ENCODE measurements at regions of chr7 and their contacts with region 1.

Region 1: GRCh38 chr7:23712368-23713284 is 2.6 kb downstream of the STK31 start:
- DNase-seq: no peak
- H3K4me3 ChIP-seq: no peak overlapping the region
- H3K27ac ChIP-seq: no peak overlapping the region
- H3K4me1 ChIP-seq: peaks cover 0 to 10% (median 4%) of the 10 kb centered on the region in 4 donors
- H3K27me3 ChIP-seq: no peaks in the 10 kb centered on the region
- CTCF ChIP-seq: peak; percentile 57 to 64 (median 61)
- EP300 ChIP-seq: no peak
- POLR2A ChIP-seq: no peak

Region 2: GRCh38 chr7:22156205-22156604 is 1556.4 kb before region 1 on chr7:
- in situ Hi-C with region 1: no loop called
- intact Hi-C with region 1: no loop called
- DNase-seq: no peak
- H3K4me3 ChIP-seq: no peak overlapping the region
- H3K27ac ChIP-seq: no peak overlapping the region
- H3K4me1 ChIP-seq: no peaks in the 10 kb centered on the region
- H3K27me3 ChIP-seq: no peaks in the 10 kb centered on the region
- CTCF ChIP-seq: no peak
- EP300 ChIP-seq: no peak
- POLR2A ChIP-seq: no peak

Region 3: GRCh38 chr7:23546897-23547572 is 165.6 kb before region 1 on chr7:
- in situ Hi-C with region 1: no loop called
- intact Hi-C with region 1: loop called (anchors 10 kb)
- DNase-seq: peak; percentile 77
- H3K4me3 ChIP-seq: no peak overlapping the region
- H3K27ac ChIP-seq: no peak overlapping the region
- H3K4me1 ChIP-seq: peaks cover 0 to 4% (median 0%) of the 10 kb centered on the region in 4 donors
- H3K27me3 ChIP-seq: no peaks in the 10 kb centered on the region
- CTCF ChIP-seq: peak; percentile 89 to 94 (median 93)
- EP300 ChIP-seq: no peak
- POLR2A ChIP-seq: no peak

Region 4: DNA sequence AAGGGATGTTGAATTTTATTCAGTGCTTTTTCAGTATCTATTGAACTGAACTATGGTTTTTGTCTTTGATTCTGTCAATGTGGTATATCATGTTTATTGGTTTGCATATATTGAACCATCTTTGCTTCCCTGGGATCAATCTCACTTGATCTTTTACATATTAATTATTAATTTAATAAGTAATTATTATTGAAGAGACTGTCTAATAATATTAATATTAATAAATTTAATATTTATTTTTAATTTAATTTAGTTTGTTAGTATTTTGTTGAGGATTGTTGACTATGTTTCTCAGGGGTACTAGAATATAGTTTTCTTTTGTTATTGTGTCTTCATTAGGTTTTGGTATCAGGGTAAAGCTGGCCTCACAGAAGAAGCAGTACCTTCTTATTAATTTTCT is 154.3 kb before region 1 on chr7:
- in situ Hi-C with region 1: loop called in 2 of 4 experiments (anchors 5 to 10 kb)
- intact Hi-C with region 1: no loop called
- DNase-seq: no peak
- H3K4me3 ChIP-seq: no peak overlapping the region
- H3K27ac ChIP-seq: no peak overlapping the region
- H3K4me1 ChIP-seq: no peaks in the 10 kb centered on the region
- H3K27me3 ChIP-seq: peaks cover 3% of the 10 kb centered on the region
- CTCF ChIP-seq: no peak
- EP300 ChIP-seq: no peak
- POLR2A ChIP-seq: no peak

Region 5: GRCh38 chr7:23570592-23571200 is 141.9 kb before region 1 on chr7:
- in situ Hi-C with region 1: loop called in 3 of 4 experiments (anchors 5 to 10 kb)
- intact Hi-C with region 1: loop called (anchors 1 kb)
- DNase-seq: peak; percentile 82
- H3K4me3 ChIP-seq: no peak overlapping the region
- H3K27ac ChIP-seq: no peak overlapping the region
- H3K4me1 ChIP-seq: no peaks in the 10 kb centered on the region
- H3K27me3 ChIP-seq: no peaks in the 10 kb centered on the region
- CTCF ChIP-seq: peak; percentile 72 to 83 (median 76)
- EP300 ChIP-seq: no peak
- POLR2A ChIP-seq: no peak